ENCODE measurements at regions of chr7 and their contacts with region 1.

Region 1: GRCh38 chr7:80699045-80699638 is 60.7 kb downstream of the CD36 start:
- DNase-seq: peak; percentile 32
- H3K4me3 ChIP-seq: no peak overlapping the region
- H3K27ac ChIP-seq: no peak overlapping the region
- H3K4me1 ChIP-seq: no peaks in the 10 kb centered on the region
- H3K27me3 ChIP-seq: no peaks in the 10 kb centered on the region
- CTCF ChIP-seq: peak; percentile 55 to 56

Region 2: DNA sequence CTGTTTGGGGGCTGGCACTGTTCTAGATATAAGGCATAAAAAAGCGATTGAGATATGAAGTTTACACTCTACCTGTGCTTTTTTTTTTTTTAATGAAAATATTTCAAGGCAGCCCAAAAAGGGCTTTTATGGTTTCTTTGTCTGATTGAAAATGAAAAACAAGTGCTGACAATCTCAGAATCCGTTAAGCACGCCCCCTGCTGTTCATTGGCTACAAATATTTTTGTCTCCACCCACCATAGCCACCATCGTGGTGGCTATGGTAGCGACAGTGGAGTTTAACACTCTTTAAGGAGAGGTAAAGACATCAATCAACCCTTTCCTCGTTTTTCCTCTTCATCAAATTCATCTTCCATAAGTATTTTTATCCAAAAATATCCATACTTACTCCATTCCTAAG is 33.5 kb after region 1 on chr7:
- CTCF ChIA-PET with region 1: no interaction called
- dilution Hi-C with region 1: no loop called
- in situ Hi-C with region 1: no loop called
- intact Hi-C with region 1: loop called (anchors 2 kb)
- DNase-seq: no peak
- H3K4me3 ChIP-seq: no peak overlapping the region
- H3K27ac ChIP-seq: no peak overlapping the region
- H3K4me1 ChIP-seq: peaks cover 10% of the 10 kb centered on the region
- H3K27me3 ChIP-seq: no peaks in the 10 kb centered on the region
- CTCF ChIP-seq: peak; percentile 11 to 34

Region 3: GRCh38 chr7:80781561-80781979 is 82.4 kb after region 1 on chr7:
- CTCF ChIA-PET with region 1: no interaction called
- dilution Hi-C with region 1: no loop called
- in situ Hi-C with region 1: no loop called
- intact Hi-C with region 1: loop called (anchors 5 kb)
- DNase-seq: peak; percentile 70
- H3K4me3 ChIP-seq: no peak overlapping the region
- H3K27ac ChIP-seq: peak overlapping the region; percentile 12
- H3K4me1 ChIP-seq: peaks cover 60% of the 10 kb centered on the region
- H3K27me3 ChIP-seq: no peaks in the 10 kb centered on the region
- CTCF ChIP-seq: no peak

Region 4: DNA sequence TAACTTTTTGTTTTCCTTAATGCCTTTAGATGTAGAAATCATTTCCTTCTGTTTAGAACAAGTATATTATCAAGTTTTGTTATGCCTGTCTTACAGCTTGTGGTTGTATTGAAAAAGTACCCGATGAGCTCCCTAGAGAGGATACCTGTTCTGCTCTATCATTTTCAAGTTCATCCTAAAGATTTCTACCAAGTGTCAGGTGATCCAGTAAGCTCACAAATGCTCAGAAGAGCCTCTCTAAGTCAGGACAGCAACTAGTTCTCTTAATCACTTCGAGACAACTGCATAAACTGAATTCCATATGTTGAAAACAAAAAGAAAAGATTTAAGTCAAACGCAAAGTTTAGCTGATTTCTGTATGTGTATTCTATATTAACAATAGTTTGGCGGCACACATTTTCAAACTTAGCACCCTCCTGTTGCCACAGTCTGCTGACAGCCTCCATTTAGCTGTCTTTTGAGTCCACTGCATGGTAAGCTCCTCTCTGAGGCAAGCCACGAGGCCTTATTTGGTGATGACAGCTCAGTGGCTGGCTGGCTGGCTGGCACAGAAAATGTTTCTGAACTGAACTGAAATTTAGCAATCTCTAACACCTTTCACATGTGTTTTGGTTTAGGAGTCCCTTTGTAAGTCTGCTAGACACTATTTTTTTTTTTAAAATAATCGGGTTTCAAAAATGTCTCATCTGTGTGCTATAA is 160.3 kb after region 1 on chr7:
- CTCF ChIA-PET with region 1: no interaction called
- dilution Hi-C with region 1: no loop called
- in situ Hi-C with region 1: no loop called
- intact Hi-C with region 1: no loop called
- DNase-seq: no peak
- H3K4me3 ChIP-seq: no peak overlapping the region
- H3K27ac ChIP-seq: no peak overlapping the region
- H3K4me1 ChIP-seq: peaks cover 14% of the 10 kb centered on the region
- H3K27me3 ChIP-seq: no peaks in the 10 kb centered on the region
- CTCF ChIP-seq: no peak

Region 5: GRCh38 chr7:81457852-81458522 is 758.8 kb after region 1 on chr7:
- CTCF ChIA-PET with region 1: no interaction called
- dilution Hi-C with region 1: no loop called
- in situ Hi-C with region 1: loop called (anchors 5 to 10 kb)
- intact Hi-C with region 1: loop called (anchors 1 kb)
- DNase-seq: no peak
- H3K4me3 ChIP-seq: no peak overlapping the region
- H3K27ac ChIP-seq: no peak overlapping the region
- H3K4me1 ChIP-seq: no peaks in the 10 kb centered on the region
- H3K27me3 ChIP-seq: no peaks in the 10 kb centered on the region
- CTCF ChIP-seq: peak; percentile 43 to 61

Region 6: GRCh38 chr7:81469869-81470723 is 771.0 kb after region 1 on chr7:
- CTCF ChIA-PET with region 1: no interaction called
- dilution Hi-C with region 1: no loop called
- in situ Hi-C with region 1: loop called in 1 of 2 experiments (anchors 10 kb)
- intact Hi-C with region 1: loop called (anchors 1 kb)
- DNase-seq: peak; percentile 51
- H3K4me3 ChIP-seq: no peak overlapping the region
- H3K27ac ChIP-seq: no peak overlapping the region
- H3K4me1 ChIP-seq: peaks cover 2% of the 10 kb centered on the region
- H3K27me3 ChIP-seq: no peaks in the 10 kb centered on the region
- CTCF ChIP-seq: peak; percentile 70 to 82